Astrocyte of the cerebellum (primary cell): ENCODE measurements at regions of chr3 and their contacts with region 1.

Region 1: DNA sequence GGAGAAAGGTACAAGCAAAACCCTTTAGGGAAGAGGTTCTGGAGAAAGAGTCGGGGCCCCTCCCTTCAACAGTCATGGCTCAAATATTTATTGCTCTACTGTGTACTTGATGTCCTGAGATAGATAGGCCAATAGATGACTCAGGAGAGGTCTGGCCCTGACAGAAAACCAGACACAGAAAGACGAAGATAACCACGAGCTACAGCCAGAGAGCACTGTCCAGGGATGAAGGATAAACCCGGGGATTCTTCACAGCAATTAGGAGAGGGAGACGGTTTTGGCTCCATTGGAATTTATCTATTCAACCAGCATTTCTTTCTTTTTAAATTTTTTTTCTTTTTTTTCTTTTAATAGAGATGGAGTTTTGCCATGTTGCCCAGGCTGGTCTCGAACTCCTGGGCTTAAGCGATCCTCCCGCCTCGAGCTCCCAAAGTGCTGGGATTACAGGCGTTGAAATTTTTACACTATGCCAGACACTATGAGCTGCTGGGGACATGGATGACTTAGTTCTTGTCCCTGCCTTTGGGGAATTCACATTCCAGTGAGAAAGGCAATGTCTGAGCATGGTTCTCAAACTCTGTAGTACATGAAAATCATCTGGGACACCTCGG is 4.6 kb upstream of the CIDEC start:
- DNase-seq: no peak
- H3K4me3 ChIP-seq: no peak overlapping the region
- CTCF ChIP-seq: no peak

Region 2: DNA sequence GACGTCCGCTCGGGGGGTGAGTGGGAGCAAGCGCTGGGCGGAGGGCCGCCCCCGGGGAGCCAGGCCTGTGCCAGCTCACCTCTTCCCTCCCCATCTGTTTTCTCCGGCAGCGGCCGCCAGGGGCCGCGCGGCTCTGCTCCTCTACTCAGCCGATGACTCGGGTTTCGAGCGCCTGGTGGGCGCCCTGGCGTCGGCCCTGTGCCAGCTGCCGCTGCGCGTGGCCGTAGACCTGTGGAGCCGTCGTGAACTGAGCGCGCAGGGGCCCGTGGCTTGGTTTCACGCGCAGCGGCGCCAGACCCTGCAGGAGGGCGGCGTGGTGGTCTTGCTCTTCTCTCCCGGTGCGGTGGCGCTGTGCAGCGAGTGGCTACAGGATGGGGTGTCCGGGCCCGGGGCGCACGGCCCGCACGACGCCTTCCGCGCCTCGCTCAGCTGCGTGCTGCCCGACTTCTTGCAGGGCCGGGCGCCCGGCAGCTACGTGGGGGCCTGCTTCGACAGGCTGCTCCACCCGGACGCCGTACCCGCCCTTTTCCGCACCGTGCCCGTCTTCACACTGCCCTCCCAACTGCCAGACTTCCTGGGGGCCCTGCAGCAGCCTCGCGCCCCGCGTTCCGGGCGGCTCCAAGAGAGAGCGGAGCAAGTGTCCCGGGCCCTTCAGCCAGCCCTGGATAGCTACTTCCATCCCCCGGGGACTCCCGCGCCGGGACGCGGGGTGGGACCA is 48.3 kb after region 1 on chr3:
- in situ Hi-C with region 1: loop called (anchors 5 kb)
- DNase-seq: no peak
- H3K4me3 ChIP-seq: peak overlapping the region; percentile 67
- CTCF ChIP-seq: peak; percentile 81

Region 3: DNA sequence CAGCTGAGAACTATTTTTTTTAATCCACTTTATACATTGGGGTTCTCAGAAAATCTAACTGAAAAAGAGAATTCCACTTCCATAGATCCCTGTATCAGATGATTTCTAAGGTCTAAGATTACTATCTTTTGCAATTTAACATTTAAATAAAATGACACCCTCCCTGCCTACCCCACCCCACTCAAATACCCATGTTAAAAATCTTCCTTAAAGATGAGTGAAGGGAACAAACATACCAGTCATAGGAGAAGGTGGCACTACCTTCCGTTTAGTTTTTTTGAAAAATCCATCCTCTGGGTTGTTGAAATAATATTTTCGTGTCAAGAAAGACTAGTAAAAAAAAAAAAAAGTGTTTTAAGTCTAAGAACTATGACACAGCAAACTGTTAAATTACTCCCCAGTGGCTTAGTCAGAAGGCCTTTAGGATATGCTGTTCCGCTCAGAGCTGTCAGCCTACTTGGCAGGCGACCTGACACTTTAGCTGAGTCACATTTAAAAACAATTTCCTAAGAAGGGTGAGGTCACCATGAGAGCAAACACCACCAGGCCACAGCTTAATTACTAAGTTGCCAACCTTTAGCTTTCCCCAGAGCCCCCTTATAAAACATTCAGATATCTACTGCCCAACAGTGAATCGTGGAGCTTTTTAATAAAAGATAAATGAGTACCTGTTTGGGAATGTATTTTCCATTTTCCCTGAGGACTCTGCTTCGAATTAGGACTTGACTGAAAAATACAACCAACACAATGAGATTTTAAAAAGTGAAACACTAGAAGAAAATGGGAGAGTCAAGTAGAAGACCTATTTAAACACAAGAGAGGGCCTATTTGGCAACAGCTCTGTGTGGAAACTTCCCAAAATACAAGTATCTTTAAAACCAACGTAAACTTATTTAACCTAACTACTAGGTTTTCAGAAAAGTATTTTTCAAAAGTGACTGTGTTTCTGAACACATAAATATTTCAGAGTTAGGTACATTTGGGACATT is 92.4 kb after region 1 on chr3:
- in situ Hi-C with region 1: no loop called
- DNase-seq: peak; percentile 89
- H3K4me3 ChIP-seq: no peak overlapping the region
- CTCF ChIP-seq: no peak

Region 4: GRCh38 chr3:10273702-10274305 is 389.1 kb after region 1 on chr3:
- in situ Hi-C with region 1: no loop called
- DNase-seq: peak; percentile 34
- H3K4me3 ChIP-seq: no peak overlapping the region
- CTCF ChIP-seq: no peak